ENCODE measurements at regions of chr17 and their contacts with region 1.

Region 1: DNA sequence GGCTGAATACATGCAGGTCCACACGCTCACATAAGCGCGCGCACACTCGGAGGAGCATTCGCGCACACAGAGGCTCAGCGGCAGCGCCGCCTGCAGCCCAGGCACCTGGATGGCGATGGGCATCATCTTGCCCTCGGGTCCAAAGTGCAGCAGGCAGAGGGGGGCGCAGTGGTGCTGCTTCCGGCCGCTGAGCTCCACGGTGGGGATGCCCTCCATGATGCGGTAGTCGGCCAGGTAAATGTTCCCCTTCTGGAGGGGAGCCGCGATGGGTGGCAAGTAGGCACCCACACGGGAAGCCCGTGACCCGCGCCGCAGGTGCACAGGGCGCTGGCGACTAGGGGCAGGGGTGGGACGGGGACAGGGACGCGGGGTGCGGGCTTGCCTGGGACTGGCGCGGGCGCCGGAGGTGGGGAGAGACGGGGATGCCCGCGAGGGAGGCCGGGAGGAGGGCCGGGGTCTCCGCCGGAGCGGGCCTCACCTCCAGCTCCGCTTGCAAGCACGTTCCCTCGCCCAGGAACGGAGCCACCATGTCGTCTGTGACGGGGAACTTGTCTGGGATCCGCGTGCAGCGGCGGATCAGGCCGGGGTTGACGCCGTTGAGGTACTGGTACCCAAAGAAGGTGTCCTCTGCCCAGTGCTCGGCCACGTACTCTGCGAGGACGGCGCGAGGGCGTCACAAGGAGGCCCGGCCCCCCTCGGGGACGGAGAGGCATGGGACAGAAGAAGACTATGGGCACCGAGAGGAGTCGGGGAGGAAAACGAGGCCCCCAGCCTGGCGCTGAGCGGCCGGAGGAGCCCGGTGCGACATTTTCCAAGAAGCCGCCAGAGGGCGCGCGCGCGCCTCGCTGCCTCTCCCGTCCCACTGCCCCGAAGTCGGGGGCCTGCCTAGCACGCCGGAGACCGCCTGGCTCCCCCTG is 8.0 kb downstream of the ALOX12B start:
- DNase-seq: peak; percentile 95
- H3K4me3 ChIP-seq: peak overlapping the region; percentile 40 to 88 (median 52)
- H3K27ac ChIP-seq: peak overlapping the region; percentile 38 to 89 (median 72)
- H3K4me1 ChIP-seq: peaks cover 0 to 30% (median 24%) of the 10 kb centered on the region in 6 donors
- H3K27me3 ChIP-seq: peaks cover 0 to 92% (median 27%) of the 10 kb centered on the region in 7 donors
- CTCF ChIP-seq: peak; percentile 46 to 94 (median 86)
- POLR2A ChIP-seq: no peak

Region 2: DNA sequence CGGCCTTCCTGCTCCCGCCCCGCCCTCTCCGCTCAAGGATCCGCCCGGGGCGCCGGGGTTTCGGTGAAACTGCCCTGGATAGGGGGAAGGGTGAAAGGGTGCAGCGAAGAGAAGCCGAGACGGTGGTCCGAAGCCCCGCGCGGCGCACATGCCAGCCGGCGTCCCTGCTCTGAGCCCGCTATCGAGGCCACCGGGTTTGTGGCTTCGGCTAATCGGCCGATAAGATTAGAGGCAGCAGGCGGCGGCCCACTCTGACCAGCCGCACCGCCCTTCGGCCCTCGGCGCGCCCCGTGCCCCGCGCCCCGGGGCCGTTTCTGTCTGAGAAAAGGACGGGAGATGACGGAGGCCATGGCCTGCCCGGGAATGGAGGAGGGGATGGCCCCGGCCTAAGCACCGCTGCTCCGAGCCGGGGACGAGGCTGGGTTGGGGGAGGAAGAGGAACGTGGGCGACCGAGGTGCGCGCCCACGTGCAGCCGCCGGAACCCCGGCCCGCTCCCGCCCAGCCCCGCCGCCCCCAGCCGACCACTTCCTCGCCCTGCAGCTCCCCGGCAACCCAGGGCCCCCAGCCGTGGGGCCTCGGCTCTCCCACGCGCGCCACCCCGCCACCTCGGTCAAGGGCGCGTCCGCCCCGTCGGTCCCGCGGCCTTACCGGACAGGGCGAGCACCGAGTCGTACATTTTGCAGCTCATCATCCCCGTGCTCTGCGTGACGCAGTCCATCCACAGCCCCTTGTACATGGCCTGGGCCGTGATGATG is 818.2 kb before region 1 on chr17:
- intact Hi-C with region 1: no loop called
- DNase-seq: peak; percentile 87
- H3K4me3 ChIP-seq: peak overlapping the region; percentile 32 to 78 (median 49)
- H3K27ac ChIP-seq: peak overlapping the region in 6 of 8 donors; percentile 25 to 81 (median 53)
- H3K4me1 ChIP-seq: peaks cover 22 to 38% (median 35%) of the 10 kb centered on the region in 6 donors
- H3K27me3 ChIP-seq: peaks cover 3 to 62% (median 27%) of the 10 kb centered on the region in 7 donors
- CTCF ChIP-seq: no peak
- POLR2A ChIP-seq: no peak

Region 3: GRCh38 chr17:8156246-8156992 is 76.9 kb after region 1 on chr17:
- intact Hi-C with region 1: no loop called
- DNase-seq: peak; percentile 100
- H3K4me3 ChIP-seq: peak overlapping the region; percentile 39 to 79 (median 52)
- H3K27ac ChIP-seq: peak overlapping the region; percentile 96 to 100 (median 98)
- H3K4me1 ChIP-seq: peaks cover 53 to 93% (median 83%) of the 10 kb centered on the region in 6 donors
- H3K27me3 ChIP-seq: no peaks in the 10 kb centered on the region
- CTCF ChIP-seq: peak in 2 of 11 experiments; percentile 32 to 35
- POLR2A ChIP-seq: peak; percentile 99 to 100 (median 99)

Region 4: DNA sequence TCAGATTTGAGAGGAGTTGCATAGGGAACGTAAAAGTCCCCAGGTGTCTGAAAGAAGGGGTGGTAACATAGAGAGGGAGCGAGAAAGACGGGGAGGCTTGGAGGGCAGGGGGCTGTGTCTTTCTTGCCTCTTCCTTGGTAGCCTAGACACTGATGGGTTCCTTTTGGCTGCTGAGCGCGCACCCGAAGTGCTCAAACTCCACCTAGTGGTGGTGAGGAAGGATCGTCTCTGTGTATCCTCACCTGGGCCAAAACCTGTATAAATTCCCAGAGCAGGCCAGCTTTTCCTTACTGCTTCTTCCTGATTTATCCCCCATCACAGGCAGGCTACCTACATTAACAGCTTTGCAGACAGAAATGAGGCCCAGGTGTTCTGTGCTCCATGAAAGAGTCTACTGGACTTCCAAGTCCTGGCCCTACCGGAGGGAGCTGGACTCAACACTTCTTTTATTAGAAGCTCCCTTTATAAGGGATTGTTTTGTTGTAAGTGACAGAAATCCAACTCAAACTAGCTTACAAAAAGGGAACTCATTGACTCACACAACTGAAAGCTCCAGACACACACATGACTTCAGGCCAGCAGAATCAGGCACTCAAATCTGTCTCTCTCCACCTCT is 221.2 kb after region 1 on chr17:
- intact Hi-C with region 1: loop called (anchors 10 kb)
- DNase-seq: peak; percentile 90
- H3K4me3 ChIP-seq: no peak overlapping the region
- H3K27ac ChIP-seq: no peak overlapping the region
- H3K4me1 ChIP-seq: peaks cover 0 to 19% (median 10%) of the 10 kb centered on the region in 6 donors
- H3K27me3 ChIP-seq: no peaks in the 10 kb centered on the region
- CTCF ChIP-seq: peak; percentile 66 to 87 (median 83)
- POLR2A ChIP-seq: no peak

Measured in spleen (tissue), 13 donors.